ENCODE measurements at regions of chr2 and their contacts with region 1.

Region 1: DNA sequence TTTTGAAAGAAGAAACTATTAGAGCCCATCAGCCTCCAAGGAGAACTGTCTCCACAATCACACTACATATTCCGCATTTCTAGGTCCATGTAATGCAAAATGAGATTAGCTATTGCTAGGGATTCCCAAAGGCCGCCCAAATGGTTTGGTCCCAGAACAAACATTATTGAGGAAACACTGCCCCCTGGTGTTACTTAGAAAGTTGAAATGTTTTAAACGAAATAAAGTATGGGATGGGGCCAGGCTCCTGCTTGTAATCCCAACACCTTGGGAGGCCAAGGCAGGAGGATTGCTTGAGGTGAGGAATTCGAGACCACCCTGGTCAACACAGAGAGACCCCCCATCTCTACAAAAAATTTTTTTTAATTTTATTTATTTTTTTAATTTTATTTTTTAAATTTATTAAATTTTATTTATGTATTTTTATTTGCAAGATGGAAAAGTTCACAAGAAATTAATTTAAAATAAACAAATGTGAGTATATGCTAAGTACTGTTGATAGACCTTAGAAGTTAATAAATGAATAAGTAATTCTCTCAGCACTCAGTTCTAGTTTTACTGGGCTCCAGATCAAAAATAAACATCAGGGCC is 5.5 kb downstream of the NHEJ1 start:
- DNase-seq: no peak
- ATAC-seq: peak; percentile 77
- H3K4me3 ChIP-seq: no peak overlapping the region
- H3K27ac ChIP-seq: no peak overlapping the region
- H3K4me1 ChIP-seq: peaks cover 4% of the 10 kb centered on the region; the same call in 1 of the 2 replicates
- H3K27me3 ChIP-seq: no peaks in the 10 kb centered on the region
- CTCF ChIP-seq: peak; percentile 37 to 66 (median 39); a peak in 5 of 6 replicates
- EP300 ChIP-seq: no peak
- POLR2A ChIP-seq: no peak
- RAD21 ChIP-seq: peak; percentile 78

Region 2: DNA sequence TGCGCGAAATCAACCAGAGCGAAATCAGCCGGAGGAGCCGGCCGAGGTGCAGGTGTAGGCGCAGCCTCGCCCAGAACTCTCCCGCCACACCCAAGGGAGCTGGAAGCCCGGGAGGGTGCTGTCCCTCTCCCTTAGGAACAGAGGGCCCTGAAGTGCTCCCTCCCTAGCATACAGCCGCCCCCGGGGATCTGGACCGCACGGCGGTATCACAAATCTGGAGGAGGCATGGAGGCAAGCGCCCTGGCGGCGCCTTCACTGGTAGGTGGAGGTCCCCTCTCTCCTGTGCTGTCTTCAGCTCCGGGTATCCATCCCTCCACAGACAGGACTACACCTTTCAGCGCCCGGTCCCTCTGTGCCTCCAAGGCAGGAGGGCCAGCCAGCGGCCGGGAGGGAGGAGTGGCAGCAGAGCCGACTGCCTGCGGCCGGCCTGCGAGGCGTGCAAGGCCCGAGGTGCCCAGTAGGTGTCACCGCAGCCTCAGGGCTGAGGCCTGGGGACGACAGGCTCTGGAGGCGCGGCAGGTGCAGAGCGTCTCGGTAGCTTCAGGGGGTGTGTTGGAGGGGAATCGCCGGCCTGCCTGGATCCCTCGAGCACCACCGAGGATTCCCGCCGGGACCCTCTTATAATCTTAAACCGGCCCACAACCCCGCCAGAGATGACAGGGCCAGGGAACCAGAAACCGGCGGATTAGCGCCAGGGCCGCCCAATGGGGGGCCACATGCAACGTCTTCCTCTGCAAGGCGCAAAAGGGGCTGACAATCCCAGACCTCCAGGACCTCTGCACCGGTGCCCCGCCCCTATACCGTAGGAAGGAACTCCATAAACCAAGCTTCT is 97.2 kb before region 1 on chr2:
- CTCF ChIA-PET with region 1: interaction called, 51 read pairs
- POLR2A ChIA-PET with region 1: no interaction called
- RAD21 ChIA-PET with region 1: interaction called, 21 read pairs
- SMC1A ChIA-PET with region 1: interaction called, 13 read pairs
- in situ Hi-C with region 1: no loop called
- intact Hi-C with region 1: loop called (anchors 1 kb)
- DNase-seq: no peak
- ATAC-seq: peak; percentile 99
- H3K4me3 ChIP-seq: no peak overlapping the region
- H3K27ac ChIP-seq: no peak overlapping the region
- H3K4me1 ChIP-seq: no peaks in the 10 kb centered on the region
- H3K27me3 ChIP-seq: peaks cover 23 to 26% of the 10 kb centered on the region in 2 experiments
- CTCF ChIP-seq: peak; percentile 80 to 93 (median 82)
- EP300 ChIP-seq: no peak
- POLR2A ChIP-seq: no peak
- RAD21 ChIP-seq: peak; percentile 84

Region 3: DNA sequence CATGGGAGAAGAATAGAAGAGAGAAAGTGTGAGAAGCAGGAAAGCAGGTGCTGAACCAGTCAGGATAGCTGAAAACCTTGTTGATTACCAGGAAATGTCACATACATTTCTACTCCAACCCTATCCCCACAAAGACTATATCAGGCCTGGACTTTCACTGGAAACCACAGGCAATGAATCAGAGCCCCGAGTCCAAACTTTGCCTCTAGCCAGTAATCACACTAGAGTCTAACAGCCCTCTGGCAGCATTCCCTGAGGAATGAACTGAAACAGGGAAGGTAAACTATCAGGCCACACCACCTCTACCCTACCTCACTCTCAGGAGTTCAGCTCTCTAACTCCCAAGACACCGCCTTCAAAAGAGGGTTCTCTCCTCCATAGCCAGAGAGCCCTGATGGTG is 75.7 kb before region 1 on chr2:
- CTCF ChIA-PET with region 1: interaction called, 89 read pairs
- POLR2A ChIA-PET with region 1: interaction called, 6 read pairs
- RAD21 ChIA-PET with region 1: interaction called, 25 read pairs
- SMC1A ChIA-PET with region 1: interaction called, 49 read pairs
- in situ Hi-C with region 1: no loop called
- intact Hi-C with region 1: no loop called
- DNase-seq: no peak
- ATAC-seq: no peak
- H3K4me3 ChIP-seq: no peak overlapping the region
- H3K27ac ChIP-seq: no peak overlapping the region
- H3K4me1 ChIP-seq: peaks cover 6% of the 10 kb centered on the region
- H3K27me3 ChIP-seq: no peaks in the 10 kb centered on the region
- CTCF ChIP-seq: no peak
- EP300 ChIP-seq: no peak
- POLR2A ChIP-seq: no peak
- RAD21 ChIP-seq: no peak

Region 4: GRCh38 chr2:219142329-219142728 is 12.8 kb before region 1 on chr2:
- CTCF ChIA-PET with region 1: interaction called, 29 read pairs
- POLR2A ChIA-PET with region 1: no interaction called
- RAD21 ChIA-PET with region 1: interaction called, 6 read pairs
- SMC1A ChIA-PET with region 1: interaction called, 16 read pairs
- in situ Hi-C with region 1: no loop called
- intact Hi-C with region 1: no loop called
- DNase-seq: no peak
- ATAC-seq: no peak
- H3K4me3 ChIP-seq: no peak overlapping the region
- H3K27ac ChIP-seq: no peak overlapping the region
- H3K4me1 ChIP-seq: no peaks in the 10 kb centered on the region
- H3K27me3 ChIP-seq: no peaks in the 10 kb centered on the region
- CTCF ChIP-seq: no peak
- EP300 ChIP-seq: no peak
- POLR2A ChIP-seq: no peak
- RAD21 ChIP-seq: no peak

Region 5: GRCh38 chr2:219402665-219403515 is 247.7 kb after region 1 on chr2:
- CTCF ChIA-PET with region 1: no interaction called
- POLR2A ChIA-PET with region 1: no interaction called
- RAD21 ChIA-PET with region 1: no interaction called
- SMC1A ChIA-PET with region 1: no interaction called
- in situ Hi-C with region 1: no loop called
- intact Hi-C with region 1: no loop called
- DNase-seq: no peak
- ATAC-seq: peak; percentile 93
- H3K4me3 ChIP-seq: no peak overlapping the region
- H3K27ac ChIP-seq: no peak overlapping the region
- H3K4me1 ChIP-seq: no peaks in the 10 kb centered on the region
- H3K27me3 ChIP-seq: no peaks in the 10 kb centered on the region; a peak in 1 of 4 replicates
- CTCF ChIP-seq: peak; percentile 89 to 95 (median 91)
- EP300 ChIP-seq: no peak
- POLR2A ChIP-seq: no peak
- RAD21 ChIP-seq: peak; percentile 84